ENCODE measurements at regions of chr4 and their contacts with region 1.

Region 1: GRCh38 chr4:83259586-83259985 is 25.0 kb downstream of the COQ2 start:
- DNase-seq: no peak
- ATAC-seq: no peak
- H3K4me3 ChIP-seq: no peak overlapping the region
- H3K4me3 Mint-ChIP-seq: no peak overlapping the region
- H3K27ac ChIP-seq: peak overlapping the region in 1 of 2 donors; percentile 5
- H3K27ac Mint-ChIP-seq: peak overlapping the region; percentile 21
- H3K4me1 ChIP-seq: peaks cover 44 to 53% of the 10 kb centered on the region in 2 donors
- H3K4me1 Mint-ChIP-seq: peaks cover 42% of the 10 kb centered on the region
- H3K27me3 ChIP-seq: no peaks in the 10 kb centered on the region
- H3K27me3 Mint-ChIP-seq: no peaks in the 10 kb centered on the region
- CTCF ChIP-seq: no peak

Region 2: GRCh38 chr4:82643994-82644733 is 615.4 kb before region 1 on chr4:
- CTCF ChIA-PET with region 1: no interaction called
- POLR2A ChIA-PET with region 1: no interaction called
- intact Hi-C with region 1: no loop called
- DNase-seq: no peak
- ATAC-seq: no peak
- H3K4me3 ChIP-seq: no peak overlapping the region
- H3K4me3 Mint-ChIP-seq: no peak overlapping the region
- H3K27ac ChIP-seq: no peak overlapping the region
- H3K27ac Mint-ChIP-seq: no peak overlapping the region
- H3K4me1 ChIP-seq: no peaks in the 10 kb centered on the region
- H3K4me1 Mint-ChIP-seq: no peaks in the 10 kb centered on the region
- H3K27me3 ChIP-seq: no peaks in the 10 kb centered on the region
- H3K27me3 Mint-ChIP-seq: peaks cover 3% of the 10 kb centered on the region
- CTCF ChIP-seq: no peak

Region 3: GRCh38 chr4:83083925-83084475 is 175.6 kb before region 1 on chr4:
- CTCF ChIA-PET with region 1: interaction called, 81 read pairs
- POLR2A ChIA-PET with region 1: interaction called, 7 read pairs
- intact Hi-C with region 1: loop called (anchors 1 kb)
- DNase-seq: peak; percentile 83
- ATAC-seq: peak; percentile 98
- H3K4me3 ChIP-seq: peak overlapping the region in 2 of 5 experiments; percentile 15 to 32
- H3K4me3 Mint-ChIP-seq: peak overlapping the region; percentile 50
- H3K27ac ChIP-seq: peak overlapping the region; percentile 77 to 93
- H3K27ac Mint-ChIP-seq: peak overlapping the region; percentile 92
- H3K4me1 ChIP-seq: peaks cover 26 to 37% of the 10 kb centered on the region in 2 donors
- H3K4me1 Mint-ChIP-seq: peaks cover 44% of the 10 kb centered on the region
- H3K27me3 ChIP-seq: no peaks in the 10 kb centered on the region
- H3K27me3 Mint-ChIP-seq: no peaks in the 10 kb centered on the region
- CTCF ChIP-seq: peak; percentile 58

Region 4: GRCh38 chr4:83132065-83132464 is 127.5 kb before region 1 on chr4:
- CTCF ChIA-PET with region 1: interaction called, 10 read pairs
- POLR2A ChIA-PET with region 1: no interaction called
- intact Hi-C with region 1: no loop called
- DNase-seq: peak; percentile 20
- ATAC-seq: peak; percentile 21
- H3K4me3 ChIP-seq: no peak overlapping the region
- H3K4me3 Mint-ChIP-seq: no peak overlapping the region
- H3K27ac ChIP-seq: peak overlapping the region in 1 of 2 donors; percentile 62
- H3K27ac Mint-ChIP-seq: peak overlapping the region; percentile 74
- H3K4me1 ChIP-seq: peaks cover 18% of the 10 kb centered on the region in 2 donors
- H3K4me1 Mint-ChIP-seq: peaks cover 34% of the 10 kb centered on the region
- H3K27me3 ChIP-seq: no peaks in the 10 kb centered on the region
- H3K27me3 Mint-ChIP-seq: no peaks in the 10 kb centered on the region
- CTCF ChIP-seq: no peak

Region 5: GRCh38 chr4:83212041-83212851 is 47.3 kb before region 1 on chr4:
- CTCF ChIA-PET with region 1: interaction called, 12 read pairs
- POLR2A ChIA-PET with region 1: interaction called, 6 read pairs
- intact Hi-C with region 1: no loop called
- DNase-seq: peak; percentile 86
- ATAC-seq: peak; percentile 87
- H3K4me3 ChIP-seq: peak overlapping the region in 2 of 5 experiments; percentile 2 to 45
- H3K4me3 Mint-ChIP-seq: peak overlapping the region; percentile 66
- H3K27ac ChIP-seq: peak overlapping the region; percentile 71 to 82
- H3K27ac Mint-ChIP-seq: peak overlapping the region; percentile 90
- H3K4me1 ChIP-seq: peaks cover 85 to 87% of the 10 kb centered on the region in 2 donors
- H3K4me1 Mint-ChIP-seq: peaks cover 83% of the 10 kb centered on the region
- H3K27me3 ChIP-seq: no peaks in the 10 kb centered on the region
- H3K27me3 Mint-ChIP-seq: no peaks in the 10 kb centered on the region
- CTCF ChIP-seq: no peak

Region 6: DNA sequence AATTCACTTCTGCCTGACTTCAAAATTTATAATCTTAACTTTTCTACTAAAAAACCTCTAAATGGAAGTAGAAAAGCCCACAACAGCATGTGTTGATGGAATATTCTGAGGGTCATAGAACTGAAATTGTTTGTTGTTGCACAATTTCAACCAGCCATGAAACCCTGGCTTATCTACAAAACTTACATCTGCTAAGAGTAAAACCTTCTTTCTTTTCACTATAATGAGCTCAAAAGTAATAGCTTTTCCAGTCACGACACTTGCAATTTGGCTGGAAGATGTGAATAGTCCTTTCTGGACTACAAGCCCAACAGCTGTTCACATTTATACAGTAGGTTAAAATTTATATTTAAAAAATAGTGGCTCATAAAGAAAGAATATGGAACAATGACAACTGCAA is 526.3 kb after region 1 on chr4:
- CTCF ChIA-PET with region 1: no interaction called
- POLR2A ChIA-PET with region 1: no interaction called
- intact Hi-C with region 1: no loop called
- DNase-seq: no peak
- ATAC-seq: no peak
- H3K4me3 ChIP-seq: no peak overlapping the region
- H3K4me3 Mint-ChIP-seq: no peak overlapping the region
- H3K27ac ChIP-seq: no peak overlapping the region
- H3K27ac Mint-ChIP-seq: no peak overlapping the region
- H3K4me1 ChIP-seq: no peaks in the 10 kb centered on the region
- H3K4me1 Mint-ChIP-seq: no peaks in the 10 kb centered on the region
- H3K27me3 ChIP-seq: no peaks in the 10 kb centered on the region
- H3K27me3 Mint-ChIP-seq: no peaks in the 10 kb centered on the region
- CTCF ChIP-seq: no peak